ENCODE measurements at regions of chr3 and their contacts with region 1.

Region 1: DNA sequence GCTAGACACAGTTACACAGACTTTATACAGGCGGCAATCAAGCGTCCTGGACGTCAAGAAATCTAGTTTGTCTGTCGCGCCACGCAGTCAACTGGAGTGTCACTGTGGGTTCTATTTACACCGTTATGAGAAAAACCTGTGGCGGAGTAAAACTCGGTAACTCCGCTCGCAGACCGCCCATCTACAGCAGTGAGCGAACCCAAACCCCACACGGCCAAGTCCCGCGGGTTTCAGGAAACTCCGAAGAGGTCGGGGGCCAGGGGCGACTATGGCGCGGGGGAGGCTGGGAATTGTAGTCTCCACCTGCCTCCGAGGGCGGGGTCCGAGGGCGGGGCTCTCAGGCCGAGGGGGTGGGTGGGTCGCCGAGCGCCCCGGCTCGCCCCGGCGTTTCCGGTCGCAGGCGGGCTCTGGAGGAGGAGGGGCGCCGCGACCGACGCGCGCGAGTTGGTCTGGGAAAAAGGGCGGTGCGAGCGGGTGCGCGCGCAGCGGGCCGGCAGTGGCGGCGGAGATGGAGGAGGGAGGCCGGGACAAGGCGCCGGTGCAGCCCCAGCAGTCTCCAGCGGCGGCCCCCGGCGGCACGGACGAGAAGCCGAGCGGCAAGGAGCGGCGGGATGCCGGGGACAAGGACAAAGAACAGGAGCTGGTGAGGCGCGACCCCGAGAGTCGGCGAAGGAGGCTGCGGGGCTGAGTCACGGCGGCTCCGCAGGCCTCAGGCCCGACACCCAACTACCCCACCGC is at the start of gene PSMD2:
- DNase-seq: peak; percentile 99
- H3K4me3 Mint-ChIP-seq: peak within 1 kb of the TSS; percentile 98
- H3K27ac Mint-ChIP-seq: peak within 1 kb of the TSS; percentile 87
- H3K4me1 Mint-ChIP-seq: peaks cover 21% of the 10 kb centered on the region
- H3K27me3 Mint-ChIP-seq: no peaks in the 10 kb centered on the region
- total RNA-seq, gene PSMD2: 244 to 257 TPM

Region 2: DNA sequence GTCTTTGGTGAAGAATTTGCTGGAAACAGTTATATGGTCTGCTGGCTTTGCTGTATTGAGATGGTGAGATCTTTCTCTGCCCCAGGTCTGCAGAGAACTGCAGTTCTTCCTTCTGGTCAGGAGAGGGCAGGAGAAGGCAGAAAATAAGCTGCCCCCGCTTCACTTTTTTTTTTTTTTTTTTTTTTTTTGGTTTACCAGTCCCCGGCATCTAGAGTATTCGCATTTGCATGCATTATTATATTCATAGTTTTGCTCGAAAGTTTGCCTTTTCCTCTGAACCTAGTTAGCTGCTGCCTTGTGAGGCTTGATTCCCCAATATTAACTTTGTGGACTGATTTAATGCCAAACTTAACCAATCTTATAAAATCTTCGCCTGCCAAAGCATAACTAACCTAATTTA is 403.6 kb before region 1 on chr3:
- CTCF ChIA-PET with region 1: no interaction called
- intact Hi-C with region 1: no loop called
- DNase-seq: peak; percentile 41
- H3K4me3 Mint-ChIP-seq: no peak overlapping the region
- H3K27ac Mint-ChIP-seq: no peak overlapping the region
- H3K4me1 Mint-ChIP-seq: peaks cover 3% of the 10 kb centered on the region
- H3K27me3 Mint-ChIP-seq: no peaks in the 10 kb centered on the region

Region 3: GRCh38 chr3:184135149-184135910 is 163.6 kb before region 1 on chr3 and contains the start of gene EIF2B5:
- CTCF ChIA-PET with region 1: no interaction called
- intact Hi-C with region 1: loop called (anchors 1 kb)
- DNase-seq: peak; percentile 94
- H3K4me3 Mint-ChIP-seq: peak within 1 kb of the TSS; percentile 97
- H3K27ac Mint-ChIP-seq: peak within 1 kb of the TSS; percentile 97
- H3K4me1 Mint-ChIP-seq: peaks cover 29% of the 10 kb centered on the region
- H3K27me3 Mint-ChIP-seq: no peaks in the 10 kb centered on the region
- total RNA-seq, gene EIF2B5: 48.8 to 56.4 TPM

Region 4: DNA sequence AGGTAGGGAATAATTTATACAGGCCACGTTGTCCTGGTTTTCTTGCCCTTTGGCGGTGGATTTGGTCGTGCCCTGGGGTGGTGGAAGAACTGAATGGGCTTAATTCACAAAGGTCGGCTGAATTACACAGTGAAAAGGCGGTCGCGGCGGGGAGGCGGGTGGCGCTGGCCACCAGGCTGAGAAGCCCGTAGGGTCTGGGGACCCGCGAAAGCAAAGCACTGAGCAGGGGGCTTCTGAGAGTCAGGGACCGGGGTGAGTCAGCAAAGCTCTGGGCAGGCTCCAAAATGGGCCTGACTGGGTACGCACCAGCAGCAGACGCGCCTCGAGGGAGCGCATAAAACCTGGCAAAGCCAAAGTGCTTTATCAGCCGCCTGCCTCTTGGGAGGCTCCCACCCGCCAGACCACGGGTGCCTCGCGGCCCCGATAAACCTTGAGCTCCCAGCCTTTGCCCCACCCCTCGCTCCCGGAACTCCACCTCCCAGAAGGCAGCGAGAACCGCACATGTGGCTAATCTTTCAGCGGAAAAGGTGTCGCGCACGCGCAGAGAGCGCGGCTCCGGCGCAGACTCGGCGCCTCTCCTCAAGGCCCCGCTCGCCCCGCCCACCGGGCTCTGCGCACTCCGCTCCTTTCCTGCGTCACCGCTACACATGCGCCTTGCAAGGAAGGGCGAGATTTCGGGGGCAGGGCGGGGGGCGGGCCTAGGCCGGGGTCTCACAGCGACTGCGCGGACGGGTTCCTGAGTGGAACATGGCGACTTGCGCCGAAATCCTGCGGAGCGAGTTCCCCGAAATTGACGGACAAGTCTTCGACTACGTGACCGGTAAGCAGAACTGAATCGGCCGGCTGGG is 113.2 kb before region 1 on chr3 and contains the start of gene ABCF3:
- CTCF ChIA-PET with region 1: no interaction called
- intact Hi-C with region 1: loop called (anchors 1 kb)
- DNase-seq: peak; percentile 99
- H3K4me3 Mint-ChIP-seq: peak within 1 kb of the TSS; percentile 94
- H3K27ac Mint-ChIP-seq: peak within 1 kb of the TSS; percentile 92
- H3K4me1 Mint-ChIP-seq: peaks cover 28% of the 10 kb centered on the region
- H3K27me3 Mint-ChIP-seq: no peaks in the 10 kb centered on the region
- total RNA-seq, gene ABCF3: 38.5 to 39.1 TPM

Region 5: DNA sequence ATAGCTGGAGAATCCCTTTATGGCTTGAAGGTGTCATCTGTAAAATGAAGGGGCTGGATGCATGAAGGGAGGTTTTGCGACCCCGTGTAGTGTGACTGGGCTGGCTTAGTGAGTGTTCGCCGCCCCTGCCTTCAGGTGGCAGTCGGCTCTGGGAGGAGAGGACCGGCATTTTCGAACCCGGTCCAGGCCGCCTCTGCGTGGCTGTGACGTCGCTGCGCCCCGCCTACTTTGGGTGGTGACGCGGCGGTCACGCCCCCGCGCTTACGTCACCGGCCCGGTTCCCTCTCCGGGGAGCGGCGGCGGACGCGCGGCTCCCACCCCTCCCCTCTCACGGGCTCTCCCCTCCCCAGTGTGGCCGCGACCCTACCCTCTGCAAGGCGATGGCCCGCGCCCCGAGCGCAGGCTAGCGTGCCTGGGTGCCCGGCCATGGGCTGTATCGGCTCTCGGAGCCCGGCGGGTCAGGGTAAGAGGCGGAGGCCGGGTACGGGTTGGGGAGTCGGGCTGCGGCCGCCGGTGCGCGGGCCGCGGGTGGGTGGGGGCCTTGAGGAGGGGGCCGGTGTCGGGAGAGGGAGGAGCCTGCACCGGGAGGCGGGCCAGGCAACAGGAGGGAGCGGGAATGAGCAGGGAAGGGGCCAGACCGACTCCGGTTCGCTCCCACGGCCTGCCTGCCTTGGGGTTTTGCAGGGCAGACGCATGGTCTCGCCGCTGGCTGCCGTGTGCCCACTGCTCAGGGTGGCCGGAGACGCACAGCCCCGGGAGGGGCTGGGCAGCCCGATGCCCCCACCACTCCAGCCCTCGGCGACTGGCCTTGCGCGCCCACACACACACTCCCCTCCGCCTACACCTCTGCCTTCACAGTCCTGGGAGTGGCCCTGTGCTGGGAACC is 37.0 kb after region 1 on chr3:
- CTCF ChIA-PET with region 1: no interaction called
- intact Hi-C with region 1: loop called (anchors 2 kb)
- DNase-seq: peak; percentile 85
- H3K4me3 Mint-ChIP-seq: peak overlapping the region; percentile 80
- H3K27ac Mint-ChIP-seq: peak overlapping the region; percentile 87
- H3K4me1 Mint-ChIP-seq: peaks cover 62% of the 10 kb centered on the region
- H3K27me3 Mint-ChIP-seq: no peaks in the 10 kb centered on the region

Region 6: GRCh38 chr3:185282696-185283394 is 983.9 kb after region 1 on chr3:
- CTCF ChIA-PET with region 1: no interaction called
- intact Hi-C with region 1: loop called (anchors 2 kb)
- DNase-seq: peak; percentile 98
- H3K4me3 Mint-ChIP-seq: peak overlapping the region; percentile 99
- H3K27ac Mint-ChIP-seq: peak overlapping the region; percentile 77
- H3K4me1 Mint-ChIP-seq: peaks cover 23% of the 10 kb centered on the region
- H3K27me3 Mint-ChIP-seq: peaks cover 18% of the 10 kb centered on the region